Posterior cingulate gyrus (tissue), 11 donors: ENCODE measurements at regions of chr14 and their contacts with region 1.

Region 1: GRCh38 chr14:23306410-23307145 is at the start of gene BCL2L2:
- DNase-seq: peak; percentile 84 to 98 (median 90)

Region 2: DNA sequence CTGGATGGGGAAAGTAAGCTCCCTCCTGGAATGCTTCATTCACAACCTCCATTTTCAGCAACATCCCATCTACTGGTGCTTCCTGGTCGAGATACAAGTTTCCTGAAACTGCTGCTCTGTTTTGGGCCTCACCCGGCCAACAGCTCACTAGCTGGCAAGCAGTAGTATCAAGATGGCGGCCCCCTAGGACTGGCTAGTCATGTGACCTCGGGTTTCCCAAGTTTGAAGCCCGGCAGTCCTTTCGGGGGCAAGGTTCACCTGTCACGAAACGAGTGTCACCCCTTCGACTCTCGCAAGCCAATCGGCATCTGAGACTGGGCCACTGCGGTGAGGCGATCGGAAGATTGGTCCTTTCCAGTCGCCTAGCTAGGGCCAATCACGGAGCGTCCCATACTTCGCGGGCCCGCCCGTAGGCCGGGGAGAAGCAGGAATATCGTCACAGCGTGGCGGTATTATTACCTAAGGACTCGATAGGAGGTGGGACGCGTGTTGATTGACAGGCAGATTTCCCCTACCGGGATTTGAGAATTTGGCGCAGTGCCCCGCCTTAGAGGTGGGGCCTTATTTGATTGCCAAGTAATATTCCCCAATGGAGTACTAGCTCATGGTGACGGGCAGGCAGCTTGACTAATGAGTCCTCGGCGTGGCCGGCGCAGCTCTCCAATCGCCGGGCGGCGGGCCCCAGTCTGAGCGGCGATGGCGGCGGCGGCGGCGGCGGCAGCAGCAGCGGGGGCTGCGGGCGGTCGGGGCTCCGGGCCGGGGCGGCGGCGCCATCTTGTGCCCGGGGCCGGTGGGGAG is 14.4 kb after region 1 on chr14 and contains the start of gene PABPN1:
- intact Hi-C with region 1: loop called (anchors 1 kb)
- DNase-seq: peak; percentile 98 to 100 (median 99)

Region 3: DNA sequence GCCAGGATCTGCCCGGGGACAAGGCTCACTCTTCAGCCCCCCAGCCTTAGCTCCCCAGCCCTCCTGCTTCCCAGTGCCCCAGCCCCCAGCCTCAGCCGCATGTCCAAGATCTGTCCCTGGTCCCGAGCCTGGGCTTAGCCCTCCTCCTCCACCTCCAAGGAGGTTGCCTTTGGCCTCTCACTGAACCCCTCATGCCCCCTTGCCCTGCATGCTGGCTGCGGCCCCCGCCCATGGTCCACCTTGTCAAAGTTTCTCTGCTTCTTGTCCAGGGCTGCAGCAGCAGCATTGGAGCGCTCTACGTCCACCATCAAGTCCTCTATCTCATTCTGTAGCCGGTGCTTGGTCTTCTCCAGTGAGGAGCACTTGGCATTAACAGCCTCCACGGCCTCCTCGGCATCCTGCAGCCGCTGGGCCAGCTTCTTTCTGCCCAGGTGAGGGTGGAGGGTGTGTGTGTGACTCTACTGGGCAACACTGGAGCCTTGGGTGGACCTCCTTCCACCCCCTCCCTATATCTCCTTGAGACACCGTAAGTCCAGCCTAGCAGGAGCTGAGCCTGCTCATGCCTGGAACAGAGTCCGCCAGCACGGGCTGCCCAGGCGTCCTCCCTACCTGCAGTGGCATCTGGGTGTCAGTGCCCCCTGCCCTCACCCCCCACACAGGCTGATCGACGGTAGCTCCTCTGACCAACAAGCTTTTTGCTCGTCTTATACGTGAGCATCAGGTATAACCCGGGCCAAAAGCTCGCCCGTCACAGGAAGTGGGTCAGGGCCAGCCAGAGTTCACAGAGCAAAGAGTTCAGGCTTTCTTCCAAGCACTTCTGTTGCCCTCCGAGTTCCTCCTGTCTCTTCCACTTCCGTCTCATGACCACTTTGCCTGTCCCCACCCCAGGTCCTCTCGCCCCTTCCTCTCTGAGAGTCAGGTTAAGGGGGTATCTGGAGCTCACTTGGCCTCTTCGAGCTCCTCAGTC is 81.6 kb after region 1 on chr14:
- intact Hi-C with region 1: no loop called
- DNase-seq: peak in 2 of 10 donors; percentile 72 to 77

Region 4: GRCh38 chr14:23861666-23862065 is 555.1 kb after region 1 on chr14:
- intact Hi-C with region 1: no loop called
- DNase-seq: no peak